ENCODE measurements at regions of chr9 and their contacts with region 1.

Region 1: DNA sequence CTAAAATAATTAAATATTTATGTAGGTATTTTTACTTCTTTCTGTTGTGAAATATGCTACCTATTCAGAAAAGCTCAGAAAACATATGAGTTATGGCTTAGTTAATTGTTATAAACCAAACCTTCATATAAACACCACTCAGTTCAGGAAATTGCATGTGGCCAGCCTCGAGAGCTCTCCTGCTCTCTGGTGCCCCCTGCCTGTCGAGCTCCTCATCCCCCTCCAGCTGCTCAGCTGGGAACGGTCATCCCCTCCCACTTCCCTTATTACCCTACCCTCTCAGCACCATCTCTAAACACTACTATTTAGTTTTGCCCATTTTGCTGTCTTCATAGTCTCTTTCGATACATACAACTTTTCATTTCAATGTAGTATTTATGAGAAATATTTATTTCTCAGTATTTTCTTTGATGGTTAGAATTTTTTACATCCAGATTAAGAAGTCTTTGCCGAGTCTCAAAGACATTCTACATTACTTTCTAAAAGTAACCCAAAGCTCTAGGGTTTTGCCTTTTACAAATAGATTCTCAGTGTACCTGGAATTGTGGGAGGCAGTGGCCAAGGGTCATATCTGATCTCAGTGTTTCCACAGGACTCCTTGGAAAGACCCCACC is 51.2 kb upstream of the SEMA4D start:
- DNase-seq: peak; percentile 84
- ATAC-seq: peak; percentile 89

Region 2: DNA sequence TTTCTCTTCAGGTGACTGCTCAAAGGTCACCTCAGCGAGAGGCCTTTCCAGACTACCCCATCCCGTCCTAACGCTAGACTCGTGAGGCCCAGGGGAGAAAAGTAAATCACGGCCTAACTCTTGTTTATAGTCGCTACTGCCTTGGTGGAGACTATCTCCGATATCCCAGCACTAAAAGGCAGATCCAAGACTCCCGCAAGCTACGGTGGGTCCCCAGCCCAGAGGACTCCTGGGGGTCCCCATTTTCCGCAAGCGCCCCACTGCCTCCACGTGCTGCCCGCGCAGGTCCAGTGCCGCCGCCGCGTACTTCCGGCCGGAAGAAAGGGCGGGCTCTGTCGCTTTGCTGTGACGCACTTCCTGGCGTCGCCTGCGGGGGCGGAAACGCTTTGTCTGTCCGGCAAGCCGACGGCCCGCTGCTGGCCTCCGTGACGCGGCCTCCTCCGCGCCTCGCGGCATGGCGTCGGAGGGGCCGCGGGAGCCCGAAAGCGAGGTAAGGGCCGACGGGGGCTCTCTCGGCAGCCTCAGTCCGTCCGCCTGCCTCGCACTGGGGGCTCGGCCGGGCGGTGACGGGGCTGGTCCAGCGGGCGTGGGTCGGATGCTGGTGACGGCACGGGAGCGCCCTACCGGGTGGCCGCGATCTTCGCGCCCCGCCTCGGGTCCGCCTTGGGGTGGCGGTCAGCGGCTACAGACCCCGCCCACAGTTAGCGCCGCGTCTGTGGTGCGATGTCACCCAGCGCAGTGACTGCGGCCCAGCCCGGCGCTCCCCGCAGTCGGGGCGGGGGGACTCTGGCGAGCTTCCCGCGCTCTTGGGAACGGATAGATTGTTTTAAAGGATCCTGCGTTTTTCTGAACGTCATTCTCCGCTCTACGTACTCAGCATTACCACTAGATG is 230.8 kb before region 1 on chr9 and contains the start of gene SECISBP2:
- intact Hi-C with region 1: loop called (anchors 1 kb)
- DNase-seq: peak; percentile 98
- ATAC-seq: peak; percentile 99
- total RNA-seq, gene SECISBP2: 16.4 TPM

Region 3: DNA sequence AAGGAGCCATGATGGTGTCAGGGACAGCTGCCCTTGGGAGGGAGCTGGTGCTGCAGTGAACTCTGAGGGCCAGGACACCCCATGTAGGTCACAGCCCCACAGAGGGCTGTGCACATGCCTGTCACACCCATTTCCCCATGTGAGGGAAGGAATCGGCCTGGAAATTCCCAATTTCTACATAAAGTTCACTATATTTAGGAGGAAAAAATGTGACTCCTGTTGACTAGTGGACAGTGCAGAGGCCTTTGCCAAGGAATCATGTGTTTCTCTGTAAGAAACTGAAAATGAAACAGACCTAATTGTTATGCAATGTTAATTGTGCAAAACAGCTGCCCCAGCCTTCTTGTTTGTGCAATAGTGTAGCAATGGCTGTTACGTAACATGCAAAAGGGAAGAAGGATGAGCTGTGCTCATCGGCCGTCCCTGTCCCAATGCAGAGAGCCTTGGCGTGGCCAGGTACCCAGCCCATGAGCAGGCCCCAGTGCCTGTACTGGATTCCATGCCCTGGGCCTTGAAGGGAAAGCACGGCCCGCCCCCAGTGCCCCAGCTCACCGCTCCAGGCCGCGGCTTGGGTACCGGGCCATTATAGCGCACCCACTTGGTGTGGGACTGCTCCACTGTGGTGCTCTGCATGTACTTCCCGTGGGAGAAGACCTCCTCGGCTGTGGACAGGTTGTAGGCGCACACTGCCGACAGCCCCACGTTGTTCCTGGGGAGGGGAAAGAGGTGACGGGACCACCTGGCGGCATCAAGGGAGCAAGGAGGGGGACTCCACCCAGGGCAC is 160.9 kb before region 1 on chr9:
- intact Hi-C with region 1: loop called (anchors 10 kb)
- DNase-seq: peak; percentile 84
- ATAC-seq: peak; percentile 77

Region 4: GRCh38 chr9:89661956-89662717 is 113.0 kb after region 1 on chr9:
- intact Hi-C with region 1: no loop called
- DNase-seq: peak; percentile 97
- ATAC-seq: peak; percentile 93

Region 5: DNA sequence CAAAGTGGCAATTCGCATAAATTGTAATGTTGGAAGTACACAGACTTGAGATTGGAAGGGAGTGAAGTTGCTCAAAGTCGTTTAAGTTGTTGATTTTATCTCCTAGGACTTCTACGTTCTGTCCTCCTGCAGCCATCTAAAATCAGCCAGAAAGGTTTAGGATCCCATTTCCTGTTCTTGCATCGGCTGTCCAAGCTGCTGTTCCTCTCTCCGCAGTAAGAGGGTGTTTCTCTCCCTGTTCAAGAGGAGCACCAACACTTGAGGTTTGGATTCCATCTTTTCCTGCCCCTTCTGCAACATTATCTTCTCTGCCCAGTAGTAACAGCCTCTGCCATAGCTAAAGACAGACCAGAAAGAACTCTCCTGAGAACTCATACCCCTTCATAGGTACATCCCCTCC is 429.0 kb after region 1 on chr9:
- intact Hi-C with region 1: no loop called
- DNase-seq: no peak
- ATAC-seq: peak; percentile 44